ENCODE measurements at regions of chr2 and their contacts with region 1.

Region 1: DNA sequence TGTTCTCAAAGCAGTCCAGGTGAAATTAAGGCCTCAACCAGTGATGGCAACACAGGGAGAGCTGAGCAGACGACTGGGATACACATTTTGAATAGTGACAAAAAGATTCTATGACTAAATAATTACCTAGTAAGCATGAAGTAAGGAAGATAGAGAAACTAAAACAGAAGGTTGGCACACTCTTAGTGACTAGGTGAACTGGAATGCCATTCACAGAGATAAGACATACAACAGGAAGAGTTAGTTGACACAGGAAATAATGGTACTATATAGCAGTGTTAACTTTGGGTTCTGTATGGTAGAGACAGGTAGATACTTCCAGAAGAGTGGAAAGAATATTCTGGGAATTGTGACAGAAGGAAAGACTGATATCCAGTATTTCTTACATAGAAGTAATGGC is 181.8 kb upstream of the NT5C1B start:
- DNase-seq: no peak
- H3K4me3 ChIP-seq: no peak overlapping the region
- H3K27ac ChIP-seq: no peak overlapping the region
- H3K4me1 ChIP-seq: no peaks in the 10 kb centered on the region
- H3K27me3 ChIP-seq: no peaks in the 10 kb centered on the region
- CTCF ChIP-seq: no peak
- POLR2A ChIP-seq: no peak

Region 2: DNA sequence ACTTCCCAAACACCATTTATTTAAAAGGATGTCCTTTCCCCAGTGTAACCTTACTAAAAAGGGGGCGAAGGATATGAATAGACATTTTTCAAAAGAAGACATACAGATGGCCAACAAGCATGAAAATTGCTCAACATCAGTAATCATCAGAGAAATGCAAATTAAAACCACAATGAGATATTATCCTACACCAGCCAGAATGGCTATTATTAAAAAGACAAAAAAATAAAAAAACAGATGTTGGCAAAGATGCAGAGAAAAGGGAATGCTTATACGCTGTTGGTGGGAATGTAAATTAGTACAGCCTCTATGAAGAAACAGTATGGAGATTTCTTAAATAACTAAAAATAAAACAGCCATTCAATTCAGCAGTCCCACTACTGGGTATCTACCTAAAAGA is 39.5 kb before region 1 on chr2:
- intact Hi-C with region 1: no loop called
- DNase-seq: no peak
- H3K4me3 ChIP-seq: no peak overlapping the region
- H3K27ac ChIP-seq: no peak overlapping the region
- H3K4me1 ChIP-seq: no peaks in the 10 kb centered on the region
- H3K27me3 ChIP-seq: no peaks in the 10 kb centered on the region
- CTCF ChIP-seq: no peak
- POLR2A ChIP-seq: no peak

Region 3: GRCh38 chr2:19086231-19086651 is 315.0 kb after region 1 on chr2:
- intact Hi-C with region 1: loop called (anchors 5 kb)
- DNase-seq: no peak
- H3K4me3 ChIP-seq: no peak overlapping the region
- H3K27ac ChIP-seq: no peak overlapping the region
- H3K4me1 ChIP-seq: no peaks in the 10 kb centered on the region
- H3K27me3 ChIP-seq: no peaks in the 10 kb centered on the region
- CTCF ChIP-seq: no peak
- POLR2A ChIP-seq: no peak